HEK293T (cell line): ENCODE measurements at regions of chr6 and their contacts with region 1.

Region 1: GRCh38 chr6:12911387-12911960 is 194.9 kb downstream of the PHACTR1 start:
- DNase-seq: peak; percentile 25

Region 2: GRCh38 chr6:13328076-13328874 is 416.8 kb after region 1 on chr6 and contains the start of gene TBC1D7:
- CTCF ChIA-PET with region 1: interaction called, 17 read pairs
- POLR2A ChIA-PET with region 1: interaction called, 7 read pairs
- DNase-seq: peak; percentile 94